ENCODE measurements at regions of chr4 and their contacts with region 1.

Region 1: DNA sequence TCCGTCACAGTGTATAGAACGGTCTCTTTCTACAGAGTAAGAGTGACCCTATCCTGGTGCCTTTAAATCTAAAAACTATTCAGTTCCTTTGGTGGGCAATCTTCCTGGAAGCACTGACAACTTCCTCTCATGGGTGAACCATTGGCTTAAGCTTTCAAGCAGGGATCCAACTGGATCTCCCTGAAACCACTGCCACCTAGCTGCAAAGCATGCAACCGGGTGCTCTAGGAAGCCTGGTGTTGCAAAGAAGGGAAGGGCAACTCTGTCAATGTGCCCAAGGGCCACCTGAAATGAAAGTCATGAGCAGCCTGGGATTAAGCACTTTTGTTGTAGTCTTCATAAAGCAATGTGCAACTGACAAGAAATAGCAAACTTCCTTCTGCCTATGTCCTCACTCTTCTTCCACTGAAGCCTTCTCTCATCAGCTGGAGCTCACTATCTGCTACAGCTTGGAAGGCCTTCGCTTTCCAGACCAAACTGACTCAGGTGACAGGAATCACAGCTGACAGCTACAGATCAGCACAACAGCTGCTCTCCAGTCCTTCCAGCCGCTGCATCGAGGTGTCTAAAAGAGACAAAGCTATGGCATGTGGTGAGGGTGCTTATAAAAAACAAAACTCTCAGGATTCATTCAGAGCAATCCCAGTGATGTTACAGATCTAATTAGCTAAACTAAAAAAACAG is 46.1 kb downstream of the SETD7 start:
- DNase-seq: peak in 1 of 2 donors; percentile 31
- ATAC-seq: peak in 7 of 8 donors; percentile 56 to 77 (median 67)
- H3K4me3 ChIP-seq: no peak overlapping the region
- H3K27ac ChIP-seq: peak overlapping the region in 3 of 10 donors; percentile 24 to 68 (median 65)
- H3K4me1 ChIP-seq: peaks cover 0 to 34% (median 21%) of the 10 kb centered on the region in 9 donors
- H3K27me3 ChIP-seq: no peaks in the 10 kb centered on the region
- CTCF ChIP-seq: peak in 8 of 9 donors; percentile 14 to 67 (median 52)

Region 2: GRCh38 chr4:139030614-139031235 is 479.1 kb before region 1 on chr4:
- intact Hi-C with region 1: loop called in 1 of 10 experiments (anchors 10 kb)
- DNase-seq: peak in 1 of 2 donors; percentile 80
- ATAC-seq: peak in 7 of 8 donors; percentile 27 to 70 (median 44)
- H3K4me3 ChIP-seq: no peak overlapping the region
- H3K27ac ChIP-seq: peak overlapping the region in 1 of 10 donors; percentile 82
- H3K4me1 ChIP-seq: peaks cover 0 to 41% (median 9%) of the 10 kb centered on the region in 9 donors
- H3K27me3 ChIP-seq: no peaks in the 10 kb centered on the region
- CTCF ChIP-seq: peak; percentile 60 to 87 (median 81)

Region 3: GRCh38 chr4:139416073-139416673 is 93.7 kb before region 1 on chr4:
- intact Hi-C with region 1: loop called in 5 of 10 experiments (anchors 10 kb)
- DNase-seq: no peak
- ATAC-seq: no peak
- H3K4me3 ChIP-seq: no peak overlapping the region
- H3K27ac ChIP-seq: no peak overlapping the region
- H3K4me1 ChIP-seq: peaks cover 0 to 26% (median 13%) of the 10 kb centered on the region in 9 donors
- H3K27me3 ChIP-seq: no peaks in the 10 kb centered on the region
- CTCF ChIP-seq: peak; percentile 51 to 82 (median 71)

Measured in heart right ventricle (tissue), 16 donors.